AG04450 (cell line): ENCODE measurements at regions of chr11 and their contacts with region 1.

Region 1: GRCh38 chr11:66694732-66695207 is 17.1 kb upstream of the RBM4B start:
- DNase-seq: peak; percentile 97
- H3K4me3 ChIP-seq: no peak overlapping the region
- H3K27ac ChIP-seq: peak overlapping the region; percentile 39
- H3K27me3 ChIP-seq: no peaks in the 10 kb centered on the region
- CTCF ChIP-seq: peak; percentile 98

Region 2: DNA sequence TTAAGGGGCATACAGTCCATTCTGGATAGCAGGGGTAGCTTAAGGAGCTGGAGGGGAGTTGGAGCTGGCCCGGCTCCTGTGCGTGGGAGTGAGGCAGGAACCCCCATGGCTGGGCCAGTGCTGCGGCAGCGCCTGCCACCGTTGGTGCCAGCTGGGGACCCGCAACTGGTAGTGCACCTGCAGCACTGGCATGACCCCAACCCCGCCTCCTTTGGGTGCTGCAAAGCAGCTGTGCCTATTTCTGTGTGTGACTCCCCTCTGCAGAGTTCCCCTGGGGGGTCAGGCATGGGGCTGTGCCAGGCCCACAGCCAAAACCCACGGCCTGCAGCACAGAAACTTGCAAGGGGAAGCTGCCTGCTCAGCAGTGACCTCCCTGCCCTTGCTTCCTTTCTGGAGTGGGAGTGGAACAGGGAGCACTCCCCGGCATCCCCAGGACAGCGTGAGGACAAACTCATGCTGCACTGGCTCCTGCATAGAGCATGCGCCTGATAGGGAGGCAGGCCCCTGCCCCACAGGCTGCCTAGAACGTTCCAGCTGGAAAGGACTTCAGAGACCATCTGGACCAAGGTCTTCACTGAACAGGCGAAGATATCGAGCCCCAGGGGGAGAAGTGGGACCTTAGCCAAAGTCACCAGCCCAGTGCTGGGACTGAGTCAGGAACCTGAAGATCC is 452.5 kb before region 1 on chr11:
- CTCF ChIA-PET with region 1: no interaction called
- POLR2A ChIA-PET with region 1: no interaction called
- DNase-seq: no peak
- H3K4me3 ChIP-seq: no peak overlapping the region
- H3K27ac ChIP-seq: no peak overlapping the region
- H3K27me3 ChIP-seq: no peaks in the 10 kb centered on the region
- CTCF ChIP-seq: no peak

Region 3: GRCh38 chr11:66835768-66836405 is 141.1 kb after region 1 on chr11:
- CTCF ChIA-PET with region 1: interaction called, 23 read pairs
- POLR2A ChIA-PET with region 1: interaction called, 8 read pairs
- DNase-seq: no peak
- H3K4me3 ChIP-seq: no peak overlapping the region
- H3K27ac ChIP-seq: no peak overlapping the region
- H3K27me3 ChIP-seq: no peaks in the 10 kb centered on the region
- CTCF ChIP-seq: no peak

Region 4: DNA sequence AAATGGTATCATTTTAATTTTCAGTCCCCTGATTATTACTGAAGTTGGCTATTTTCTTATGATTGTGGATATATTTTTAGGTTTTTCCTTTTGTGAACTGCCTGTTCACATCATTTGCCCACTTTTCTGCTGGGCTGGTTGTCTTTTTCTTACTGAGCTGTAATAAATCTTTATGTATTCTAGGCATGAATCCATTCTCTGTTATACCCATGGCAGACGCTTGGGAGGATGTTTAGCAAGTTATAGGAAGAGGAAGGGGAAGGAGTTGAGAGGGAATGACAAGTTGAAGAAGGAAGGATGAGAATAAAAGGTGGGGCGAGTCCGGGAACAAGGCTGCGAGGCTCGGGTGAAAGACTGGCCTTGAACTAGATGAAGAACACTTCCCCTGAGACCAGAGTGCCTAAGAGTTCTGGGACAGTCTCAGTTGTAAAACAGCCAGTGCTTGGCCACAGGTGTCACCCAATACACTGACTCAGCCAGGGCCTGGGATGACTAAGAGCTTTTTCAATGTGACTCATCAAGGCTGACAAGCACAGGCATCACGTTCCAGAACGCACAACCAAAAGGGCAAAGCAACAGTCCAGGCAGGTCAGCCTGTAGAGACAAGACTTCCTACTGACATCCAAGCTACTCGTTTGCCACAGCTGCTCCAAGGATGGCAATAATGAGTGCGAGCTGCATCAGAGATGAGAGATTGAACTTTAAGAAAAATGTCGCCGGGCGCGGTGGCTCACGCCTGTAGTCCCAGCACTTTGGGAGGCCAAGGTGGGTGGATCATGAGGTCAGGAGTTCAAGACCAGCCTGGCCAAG is 197.3 kb after region 1 on chr11:
- CTCF ChIA-PET with region 1: no interaction called
- POLR2A ChIA-PET with region 1: no interaction called
- DNase-seq: peak; percentile 81
- H3K4me3 ChIP-seq: no peak overlapping the region
- H3K27ac ChIP-seq: peak overlapping the region; percentile 81
- H3K27me3 ChIP-seq: no peaks in the 10 kb centered on the region
- CTCF ChIP-seq: no peak

Region 5: GRCh38 chr11:66981976-66982578 is 287.3 kb after region 1 on chr11:
- CTCF ChIA-PET with region 1: no interaction called
- POLR2A ChIA-PET with region 1: no interaction called
- DNase-seq: peak; percentile 65
- H3K4me3 ChIP-seq: no peak overlapping the region
- H3K27ac ChIP-seq: peak overlapping the region; percentile 47
- H3K27me3 ChIP-seq: peaks cover 2% of the 10 kb centered on the region
- CTCF ChIP-seq: no peak